ENCODE measurements at regions of chr14 and their contacts with region 1.

Region 1: GRCh38 chr14:55354500-55354899 is 57.1 kb downstream of the ATG14 start:
- DNase-seq: peak; percentile 41 to 76 (median 51)
- H3K4me3 ChIP-seq: peak overlapping the region; percentile 20
- H3K4me3 Mint-ChIP-seq: peak overlapping the region in 6 of 7 donors; percentile 74 to 93 (median 81)
- H3K27ac ChIP-seq: no peak overlapping the region
- H3K27ac Mint-ChIP-seq: peak overlapping the region; percentile 26 to 99 (median 95)
- H3K4me1 ChIP-seq: peaks cover 14% of the 10 kb centered on the region
- H3K4me1 Mint-ChIP-seq: peaks cover 21 to 25% (median 24%) of the 10 kb centered on the region in 3 donors
- H3K27me3 ChIP-seq: no peaks in the 10 kb centered on the region
- H3K27me3 Mint-ChIP-seq: no peaks in the 10 kb centered on the region

Region 2: GRCh38 chr14:55212634-55213033 is 141.9 kb before region 1 on chr14:
- CTCF ChIA-PET with region 1: interaction called, 18 read pairs
- POLR2A ChIA-PET with region 1: no interaction called
- DNase-seq: no peak
- H3K4me3 ChIP-seq: no peak overlapping the region
- H3K4me3 Mint-ChIP-seq: no peak overlapping the region
- H3K27ac ChIP-seq: no peak overlapping the region
- H3K27ac Mint-ChIP-seq: no peak overlapping the region
- H3K4me1 ChIP-seq: no peaks in the 10 kb centered on the region
- H3K4me1 Mint-ChIP-seq: peaks cover 2 to 5% (median 4%) of the 10 kb centered on the region in 3 donors
- H3K27me3 ChIP-seq: no peaks in the 10 kb centered on the region
- H3K27me3 Mint-ChIP-seq: peaks cover 0 to 2% of the 10 kb centered on the region in 2 donors

Region 3: DNA sequence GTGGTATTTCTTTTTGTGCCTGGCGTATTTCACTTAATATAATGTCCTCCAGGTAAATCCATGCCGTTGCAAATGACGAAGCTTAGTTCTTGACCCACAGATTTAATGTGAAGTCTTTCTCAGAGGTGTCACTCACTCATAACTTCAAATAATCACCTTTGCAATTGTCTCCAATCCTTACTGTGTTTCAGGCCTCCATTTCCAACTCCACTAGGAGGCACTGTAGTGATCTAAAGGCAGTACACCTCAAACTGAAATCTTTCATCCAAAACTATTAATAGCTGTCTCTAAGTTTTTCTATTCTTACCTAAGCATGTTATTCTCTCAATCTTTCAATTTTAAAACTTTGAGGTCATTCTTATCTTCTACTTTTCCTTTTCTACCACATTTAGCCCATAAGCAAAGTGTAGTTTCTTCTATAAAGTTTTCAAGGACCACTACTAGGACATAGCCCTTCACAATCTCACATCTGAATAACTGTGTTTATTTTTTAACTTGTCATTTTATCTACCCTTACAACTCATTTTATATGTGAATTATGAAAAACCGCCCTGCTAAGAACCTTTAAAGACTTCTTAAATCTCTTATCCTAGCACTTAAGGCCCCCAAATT is 108.7 kb before region 1 on chr14:
- CTCF ChIA-PET with region 1: interaction called, 20 read pairs
- POLR2A ChIA-PET with region 1: no interaction called
- DNase-seq: peak in 2 of 5 donors; percentile 10 to 25
- H3K4me3 ChIP-seq: no peak overlapping the region
- H3K4me3 Mint-ChIP-seq: no peak overlapping the region
- H3K27ac ChIP-seq: no peak overlapping the region
- H3K27ac Mint-ChIP-seq: no peak overlapping the region
- H3K4me1 ChIP-seq: no peaks in the 10 kb centered on the region
- H3K4me1 Mint-ChIP-seq: no peaks in the 10 kb centered on the region
- H3K27me3 ChIP-seq: no peaks in the 10 kb centered on the region
- H3K27me3 Mint-ChIP-seq: peaks cover 17 to 35% of the 10 kb centered on the region in 2 donors

Region 4: DNA sequence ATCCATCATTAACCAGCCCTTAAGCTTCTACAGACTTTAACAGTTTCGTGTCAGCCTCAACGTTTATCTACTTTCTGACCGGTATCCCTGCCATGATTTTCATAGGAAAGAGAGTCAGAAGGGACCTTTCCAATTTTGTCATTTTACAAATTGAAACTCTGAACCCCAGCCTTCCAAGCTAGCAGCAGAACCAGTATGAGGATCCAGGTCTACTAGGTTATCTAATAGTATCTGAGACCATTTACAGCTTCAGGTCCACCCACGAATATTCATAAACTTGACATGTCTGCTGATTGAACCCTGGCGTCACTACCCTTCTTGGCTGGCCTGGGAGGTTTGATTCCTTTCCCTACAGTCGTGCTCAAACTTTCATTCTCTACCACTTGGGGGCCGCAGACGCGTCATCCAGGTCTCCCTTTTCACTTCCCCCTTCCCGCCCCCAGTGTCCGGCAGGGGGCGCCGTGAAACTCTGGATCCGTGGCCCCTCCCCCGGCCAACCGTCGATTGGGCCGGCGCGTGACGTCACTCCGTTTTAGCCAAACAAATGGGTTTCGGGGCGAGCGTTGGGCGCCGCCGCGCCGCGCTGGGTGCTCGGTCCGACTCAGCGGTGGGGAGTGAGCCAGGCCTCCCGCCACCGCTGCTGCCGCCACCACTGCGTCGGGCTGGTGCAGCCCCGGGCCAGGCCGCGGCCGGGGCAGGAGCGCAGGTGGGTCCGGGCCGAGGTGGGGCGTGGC is 83.5 kb before region 1 on chr14 and contains the start of gene FBXO34:
- CTCF ChIA-PET with region 1: interaction called, 159 read pairs
- POLR2A ChIA-PET with region 1: interaction called, 13 read pairs
- DNase-seq: peak; percentile 98 to 100 (median 99)
- H3K4me3 ChIP-seq: peak within 1 kb of the TSS; percentile 94
- H3K4me3 Mint-ChIP-seq: peak within 1 kb of the TSS; percentile 89 to 96 (median 91)
- H3K27ac ChIP-seq: peak within 1 kb of the TSS; percentile 86
- H3K27ac Mint-ChIP-seq: peak within 1 kb of the TSS; percentile 92 to 98 (median 94)
- H3K4me1 ChIP-seq: peaks cover 21% of the 10 kb centered on the region
- H3K4me1 Mint-ChIP-seq: peaks cover 34 to 51% (median 47%) of the 10 kb centered on the region in 3 donors
- H3K27me3 ChIP-seq: no peaks in the 10 kb centered on the region
- H3K27me3 Mint-ChIP-seq: peaks cover 0 to 9% of the 10 kb centered on the region in 2 donors
- total RNA-seq, gene FBXO34: 16.2 to 17.9 TPM

Region 5: GRCh38 chr14:55333711-55334485 is 20.6 kb before region 1 on chr14:
- CTCF ChIA-PET with region 1: interaction called, 30 read pairs
- POLR2A ChIA-PET with region 1: interaction called, 8 read pairs
- DNase-seq: no peak
- H3K4me3 ChIP-seq: peak overlapping the region; percentile 33
- H3K4me3 Mint-ChIP-seq: peak overlapping the region; percentile 68 to 90 (median 88)
- H3K27ac ChIP-seq: peak overlapping the region; percentile 66
- H3K27ac Mint-ChIP-seq: peak overlapping the region; percentile 88 to 99 (median 96)
- H3K4me1 ChIP-seq: peaks cover 70% of the 10 kb centered on the region
- H3K4me1 Mint-ChIP-seq: peaks cover 82 to 94% (median 90%) of the 10 kb centered on the region in 3 donors
- H3K27me3 ChIP-seq: no peaks in the 10 kb centered on the region
- H3K27me3 Mint-ChIP-seq: peaks cover 0 to 2% of the 10 kb centered on the region in 2 donors

Region 6: DNA sequence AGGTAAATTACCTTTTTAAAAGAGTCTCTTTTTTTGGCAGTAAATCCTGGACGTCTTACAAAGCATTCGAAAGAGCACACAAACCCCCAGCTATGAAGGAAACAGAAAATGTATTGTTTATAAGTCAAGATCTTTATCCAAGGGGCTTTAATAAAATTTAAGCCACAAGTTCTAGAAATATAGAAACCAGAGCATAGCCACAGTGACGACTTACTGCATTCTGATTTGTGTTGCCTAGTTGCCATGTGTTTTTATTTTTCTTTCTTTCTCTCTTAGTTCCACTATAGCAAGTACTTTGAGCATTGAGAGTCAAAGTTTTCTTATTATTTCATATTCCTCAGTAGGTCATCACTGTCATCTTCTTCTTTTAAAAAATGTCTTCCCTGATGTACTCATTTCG is 133.7 kb after region 1 on chr14:
- CTCF ChIA-PET with region 1: no interaction called
- POLR2A ChIA-PET with region 1: no interaction called
- DNase-seq: no peak
- H3K4me3 ChIP-seq: no peak overlapping the region
- H3K4me3 Mint-ChIP-seq: no peak overlapping the region
- H3K27ac ChIP-seq: no peak overlapping the region
- H3K27ac Mint-ChIP-seq: no peak overlapping the region
- H3K4me1 ChIP-seq: no peaks in the 10 kb centered on the region
- H3K4me1 Mint-ChIP-seq: no peaks in the 10 kb centered on the region
- H3K27me3 ChIP-seq: no peaks in the 10 kb centered on the region
- H3K27me3 Mint-ChIP-seq: peaks cover 11 to 14% of the 10 kb centered on the region in 2 donors

Region 7: DNA sequence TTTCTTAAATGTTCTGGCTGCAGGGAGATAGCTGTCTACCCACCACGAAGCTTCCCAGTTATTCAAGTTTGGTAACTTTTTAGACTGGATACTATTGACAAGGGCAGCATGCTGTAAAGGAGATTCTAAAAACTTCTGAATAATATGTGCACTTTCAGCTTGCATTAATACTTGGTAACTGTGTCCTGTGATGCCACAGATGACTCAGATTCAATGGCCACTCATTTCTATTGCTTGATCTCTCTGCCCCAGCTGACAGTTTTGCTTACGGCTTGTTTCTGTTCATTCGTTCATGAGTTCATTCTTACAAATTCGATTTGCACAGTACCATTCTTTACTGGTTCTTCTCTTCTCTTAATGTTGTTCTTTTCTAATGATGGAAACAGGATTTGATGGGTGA is 906.5 kb after region 1 on chr14:
- CTCF ChIA-PET with region 1: no interaction called
- POLR2A ChIA-PET with region 1: no interaction called
- DNase-seq: no peak
- H3K4me3 ChIP-seq: no peak overlapping the region
- H3K4me3 Mint-ChIP-seq: no peak overlapping the region
- H3K27ac ChIP-seq: no peak overlapping the region
- H3K27ac Mint-ChIP-seq: no peak overlapping the region
- H3K4me1 ChIP-seq: no peaks in the 10 kb centered on the region
- H3K4me1 Mint-ChIP-seq: no peaks in the 10 kb centered on the region
- H3K27me3 ChIP-seq: no peaks in the 10 kb centered on the region
- H3K27me3 Mint-ChIP-seq: no peaks in the 10 kb centered on the region